ENCODE measurements at regions of chr21 and their contacts with region 1.

Region 1: DNA sequence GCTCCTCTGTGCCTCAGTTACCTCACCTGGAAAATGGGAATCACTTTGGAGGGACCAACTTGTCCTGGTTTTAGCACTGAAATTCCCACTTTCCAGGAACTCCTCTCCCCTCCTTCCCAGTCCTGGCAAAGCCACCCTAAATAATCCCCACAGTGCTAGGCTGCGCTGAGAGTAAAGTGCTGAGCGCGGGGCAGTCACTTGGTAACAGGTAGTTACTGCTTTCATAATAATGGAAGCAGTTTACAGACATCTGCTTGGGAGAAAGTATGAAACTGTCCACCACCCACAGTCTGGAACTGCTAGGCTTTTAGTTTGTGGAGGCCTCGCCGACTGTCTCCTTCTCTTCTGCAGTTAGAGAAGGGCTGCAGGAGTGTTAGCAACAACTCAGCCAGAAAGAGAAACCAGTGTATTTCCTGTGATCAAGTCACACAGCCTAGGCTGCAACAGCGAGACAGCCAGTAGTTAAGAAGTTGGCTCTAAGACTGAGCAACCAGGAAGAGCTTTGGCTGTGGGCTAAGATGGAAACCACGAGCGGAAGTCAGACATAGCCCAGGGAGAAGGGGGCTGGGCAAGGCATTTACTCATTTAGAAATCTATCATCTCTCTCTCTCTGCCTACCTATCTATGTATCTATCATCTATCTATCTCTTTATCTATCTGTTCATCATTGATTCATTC is 30.8 kb upstream of the ABCG1 start:
- DNase-seq: peak; percentile 39 to 90 (median 86)
- ATAC-seq: peak; percentile 96
- H3K4me3 ChIP-seq: peak overlapping the region; percentile 25
- H3K4me3 Mint-ChIP-seq: peak overlapping the region; percentile 39 to 90 (median 75)
- H3K27ac ChIP-seq: peak overlapping the region; percentile 85
- H3K27ac Mint-ChIP-seq: peak overlapping the region; percentile 91 to 98 (median 95)
- H3K4me1 ChIP-seq: peaks cover 73 to 90% of the 10 kb centered on the region in 2 donors
- H3K4me1 Mint-ChIP-seq: peaks cover 34 to 83% (median 65%) of the 10 kb centered on the region in 7 donors
- H3K27me3 ChIP-seq: no peaks in the 10 kb centered on the region
- H3K27me3 Mint-ChIP-seq: peaks cover 0 to 8% (median 0%) of the 10 kb centered on the region in 5 donors

Region 2: GRCh38 chr21:42199488-42200458 is 11.7 kb after region 1 on chr21:
- CTCF ChIA-PET with region 1: interaction called, 3 read pairs
- POLR2A ChIA-PET with region 1: interaction called, 54 read pairs
- intact Hi-C with region 1: loop called in 1 of 2 experiments (anchors 1 kb)
- DNase-seq: peak in 7 of 9 donors; percentile 33 to 64 (median 49)
- ATAC-seq: peak; percentile 86
- H3K4me3 ChIP-seq: no peak overlapping the region
- H3K4me3 Mint-ChIP-seq: peak overlapping the region; percentile 34 to 73 (median 66)
- H3K27ac ChIP-seq: peak overlapping the region; percentile 38
- H3K27ac Mint-ChIP-seq: peak overlapping the region; percentile 13 to 95 (median 87)
- H3K4me1 ChIP-seq: peaks cover 25 to 39% of the 10 kb centered on the region in 2 donors
- H3K4me1 Mint-ChIP-seq: peaks cover 37 to 85% (median 75%) of the 10 kb centered on the region in 7 donors
- H3K27me3 ChIP-seq: no peaks in the 10 kb centered on the region
- H3K27me3 Mint-ChIP-seq: peaks cover 0 to 16% (median 0%) of the 10 kb centered on the region in 5 donors

Region 3: DNA sequence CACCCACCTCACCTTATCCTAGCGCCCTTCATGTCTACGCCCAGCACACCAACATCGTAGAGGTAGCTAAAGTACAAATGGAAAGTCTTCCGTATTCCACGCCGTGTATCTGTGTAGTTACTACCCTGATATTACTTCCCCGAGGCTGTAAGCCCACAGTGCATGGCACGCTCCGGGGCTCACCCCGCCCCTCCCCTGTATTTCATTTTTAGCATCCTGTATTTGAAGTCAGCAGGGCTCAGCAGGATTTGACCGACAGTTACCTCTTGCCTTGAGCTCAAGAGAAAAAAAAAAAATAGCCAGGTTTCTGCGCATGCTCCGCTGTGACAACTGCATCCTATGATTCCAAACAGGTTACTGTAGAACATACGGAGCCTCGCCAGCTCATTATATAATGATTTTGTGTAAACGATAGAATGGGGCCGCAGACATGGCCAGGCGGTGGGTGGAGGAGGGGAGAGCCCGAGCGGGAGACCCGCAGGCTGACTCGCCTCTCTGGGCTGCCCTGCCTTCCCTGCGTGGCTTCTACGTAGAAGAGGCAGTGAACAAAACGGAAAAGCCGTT is 32.1 kb after region 1 on chr21:
- CTCF ChIA-PET with region 1: no interaction called
- POLR2A ChIA-PET with region 1: interaction called, 16 read pairs
- intact Hi-C with region 1: loop called (anchors 1 kb)
- DNase-seq: peak; percentile 58 to 95 (median 93)
- ATAC-seq: peak; percentile 93
- H3K4me3 ChIP-seq: peak overlapping the region; percentile 69
- H3K4me3 Mint-ChIP-seq: peak overlapping the region; percentile 85 to 99 (median 93)
- H3K27ac ChIP-seq: peak overlapping the region; percentile 81
- H3K27ac Mint-ChIP-seq: peak overlapping the region; percentile 71 to 99 (median 91)
- H3K4me1 ChIP-seq: peaks cover 5 to 13% of the 10 kb centered on the region in 2 donors
- H3K4me1 Mint-ChIP-seq: peaks cover 21 to 44% (median 36%) of the 10 kb centered on the region in 7 donors
- H3K27me3 ChIP-seq: no peaks in the 10 kb centered on the region
- H3K27me3 Mint-ChIP-seq: peaks cover 0 to 3% (median 0%) of the 10 kb centered on the region in 5 donors

Region 4: DNA sequence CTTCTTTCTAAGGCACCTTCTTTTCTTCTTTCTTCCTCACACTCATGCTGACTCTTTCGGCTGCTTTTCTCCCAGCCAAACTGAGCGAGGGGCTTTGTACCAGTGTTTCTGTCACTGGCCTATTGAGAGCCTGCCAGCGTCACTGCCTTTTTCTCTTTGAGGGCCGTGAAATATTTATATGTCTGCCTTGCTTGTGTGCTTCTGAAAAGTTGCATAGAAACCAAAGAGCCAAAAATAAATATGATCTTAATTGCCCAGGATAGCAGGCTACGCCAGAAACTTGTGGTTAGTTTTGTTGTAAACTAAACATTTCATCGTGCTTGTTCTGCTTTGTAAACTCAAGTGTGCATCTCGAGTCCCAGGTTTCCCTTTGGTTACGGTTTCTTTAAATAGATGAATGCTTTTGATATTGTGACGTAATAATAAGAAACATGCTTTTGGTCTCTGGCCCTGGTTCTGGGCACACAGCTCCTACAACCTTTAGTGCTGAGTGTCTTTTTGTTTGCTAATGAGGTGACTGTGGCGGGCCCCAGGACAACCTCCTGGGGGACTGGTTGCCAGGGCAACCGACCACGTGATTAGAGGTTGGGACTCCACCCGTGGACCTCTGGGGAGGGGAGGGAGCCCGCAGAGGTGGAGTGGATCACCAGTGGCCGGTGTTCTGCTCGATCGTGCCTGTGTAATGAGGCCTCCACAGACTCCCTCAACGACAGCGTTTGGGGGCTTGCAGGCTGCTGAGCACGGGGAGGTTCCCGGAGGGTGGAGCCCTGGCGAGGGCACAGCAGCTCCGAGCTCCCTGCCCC is 336.4 kb after region 1 on chr21:
- CTCF ChIA-PET with region 1: no interaction called
- POLR2A ChIA-PET with region 1: no interaction called
- intact Hi-C with region 1: loop called in 1 of 2 experiments (anchors 1 kb)
- DNase-seq: peak in 3 of 9 donors; percentile 10 to 25 (median 20)
- ATAC-seq: peak; percentile 60
- H3K4me3 ChIP-seq: no peak overlapping the region
- H3K4me3 Mint-ChIP-seq: peak overlapping the region in 7 of 10 donors; percentile 20 to 52 (median 43)
- H3K27ac ChIP-seq: no peak overlapping the region
- H3K27ac Mint-ChIP-seq: peak overlapping the region in 8 of 9 donors; percentile 6 to 88 (median 56)
- H3K4me1 ChIP-seq: peaks cover 16 to 30% of the 10 kb centered on the region in 2 donors
- H3K4me1 Mint-ChIP-seq: peaks cover 39 to 64% (median 54%) of the 10 kb centered on the region in 7 donors
- H3K27me3 ChIP-seq: no peaks in the 10 kb centered on the region
- H3K27me3 Mint-ChIP-seq: no peaks in the 10 kb centered on the region

Measured in naive thymus-derived CD4-positive, alpha-beta T cell (primary cell).